ENCODE measurements at regions of chr11 and their contacts with region 1.

Region 1: GRCh38 chr11:103326070-103326794 is 217.0 kb downstream of the DYNC2H1 start:
- DNase-seq: peak; percentile 51
- ATAC-seq: peak; percentile 97
- H3K4me3 ChIP-seq: peak overlapping the region in 1 of 3 experiments; percentile 9; a peak in 1 of 6 replicates
- H3K27ac ChIP-seq: no peak overlapping the region
- H3K4me1 ChIP-seq: no peaks in the 10 kb centered on the region
- H3K27me3 ChIP-seq: no peaks in the 10 kb centered on the region
- CTCF ChIP-seq: peak; percentile 70
- EP300 ChIP-seq: no peak
- POLR2A ChIP-seq: no peak
- RAD21 ChIP-seq: no peak

Region 2: GRCh38 chr11:102981324-102981910 is 344.8 kb before region 1 on chr11:
- CTCF ChIA-PET with region 1: no interaction called
- POLR2A ChIA-PET with region 1: no interaction called
- in situ Hi-C with region 1: no loop called
- intact Hi-C with region 1: no loop called
- DNase-seq: no peak
- ATAC-seq: no peak
- H3K4me3 ChIP-seq: no peak overlapping the region
- H3K27ac ChIP-seq: no peak overlapping the region
- H3K4me1 ChIP-seq: no peaks in the 10 kb centered on the region
- H3K27me3 ChIP-seq: no peaks in the 10 kb centered on the region
- CTCF ChIP-seq: no peak
- EP300 ChIP-seq: no peak
- POLR2A ChIP-seq: no peak
- RAD21 ChIP-seq: no peak

Region 3: DNA sequence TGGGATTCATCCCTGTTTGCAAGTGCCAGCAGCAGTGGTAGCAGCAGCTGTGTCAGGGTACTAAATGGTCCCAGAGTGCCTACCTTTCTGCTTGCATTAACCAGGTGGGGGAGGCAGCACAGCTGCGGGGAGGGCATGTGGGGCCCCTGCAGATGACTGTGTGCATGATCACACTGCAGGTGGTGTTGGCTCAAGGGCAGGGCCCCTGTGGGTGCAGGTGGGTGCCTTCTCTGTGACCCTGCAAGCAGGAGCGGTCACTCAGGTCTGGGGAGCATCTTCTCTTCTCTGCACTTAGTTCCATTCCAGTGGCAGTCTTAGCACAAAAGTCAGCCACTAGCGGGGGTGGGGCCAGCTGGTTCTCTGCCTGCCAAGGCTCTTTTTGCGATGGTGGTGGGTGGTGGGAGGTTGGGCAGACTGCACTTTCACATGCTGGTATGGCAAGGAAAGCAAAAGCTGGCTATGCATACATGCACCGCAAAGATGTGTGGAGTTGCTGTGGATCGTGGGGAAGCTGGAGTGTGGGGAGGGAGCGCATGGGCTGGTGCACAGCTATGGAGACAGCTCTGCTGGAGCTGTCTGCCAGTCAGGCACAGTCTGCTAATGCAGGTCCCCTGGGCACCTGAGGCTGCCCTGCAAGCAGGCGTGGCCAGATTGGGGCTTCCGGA is 59.9 kb before region 1 on chr11:
- CTCF ChIA-PET with region 1: no interaction called
- POLR2A ChIA-PET with region 1: no interaction called
- in situ Hi-C with region 1: no loop called
- intact Hi-C with region 1: no loop called
- DNase-seq: no peak
- ATAC-seq: no peak
- H3K4me3 ChIP-seq: no peak overlapping the region
- H3K27ac ChIP-seq: no peak overlapping the region
- H3K4me1 ChIP-seq: no peaks in the 10 kb centered on the region
- H3K27me3 ChIP-seq: no peaks in the 10 kb centered on the region; a peak in 1 of 5 replicates
- CTCF ChIP-seq: no peak
- EP300 ChIP-seq: no peak
- POLR2A ChIP-seq: no peak
- RAD21 ChIP-seq: no peak

Region 4: GRCh38 chr11:103594283-103594682 is 268.1 kb after region 1 on chr11:
- CTCF ChIA-PET with region 1: no interaction called
- POLR2A ChIA-PET with region 1: no interaction called
- in situ Hi-C with region 1: loop called (anchors 10 kb)
- intact Hi-C with region 1: no loop called
- DNase-seq: no peak
- ATAC-seq: peak; percentile 46; the same call in 2 of the 3 replicates
- H3K4me3 ChIP-seq: no peak overlapping the region
- H3K27ac ChIP-seq: no peak overlapping the region
- H3K4me1 ChIP-seq: no peaks in the 10 kb centered on the region
- H3K27me3 ChIP-seq: no peaks in the 10 kb centered on the region
- CTCF ChIP-seq: no peak
- EP300 ChIP-seq: no peak
- POLR2A ChIP-seq: no peak
- RAD21 ChIP-seq: no peak

Measured in HepG2 (cell line).